Activated CD4-positive, alpha-beta T cell treated with anti-CD3 and anti-CD28 coated beads for 36 hours (primary cell): ENCODE measurements at regions of chr18 and their contacts with region 1.

Region 1: DNA sequence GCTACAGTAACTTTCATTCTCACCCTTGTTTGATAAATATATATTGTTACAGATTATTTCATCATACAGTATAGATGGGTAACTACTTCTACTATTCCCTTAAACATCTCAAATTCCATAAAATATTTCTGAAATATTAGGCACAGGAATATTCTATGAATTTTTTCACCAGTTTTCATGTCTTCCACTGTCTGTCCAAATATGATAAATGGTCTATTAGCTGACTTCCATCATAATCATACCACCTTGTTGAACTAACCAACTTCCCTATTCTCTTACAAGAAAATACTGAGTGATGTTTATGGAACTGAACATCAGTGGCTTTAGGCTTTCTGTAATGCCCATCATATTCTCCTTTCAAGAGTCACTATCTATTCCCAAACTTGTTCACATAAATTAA is 82.4 kb downstream of the TRAPPC8 start:
- DNase-seq: no peak
- ATAC-seq: no peak
- H3K4me3 Mint-ChIP-seq: no peak overlapping the region
- H3K27ac Mint-ChIP-seq: no peak overlapping the region
- H3K4me1 Mint-ChIP-seq: peaks cover 2% of the 10 kb centered on the region
- H3K27me3 Mint-ChIP-seq: no peaks in the 10 kb centered on the region

Region 2: GRCh38 chr18:31931163-31931885 is 70.8 kb after region 1 on chr18:
- CTCF ChIA-PET with region 1: no interaction called
- POLR2A ChIA-PET with region 1: no interaction called
- intact Hi-C with region 1: no loop called
- DNase-seq: no peak
- ATAC-seq: no peak
- H3K4me3 Mint-ChIP-seq: no peak overlapping the region
- H3K27ac Mint-ChIP-seq: no peak overlapping the region
- H3K4me1 Mint-ChIP-seq: peaks cover 3% of the 10 kb centered on the region
- H3K27me3 Mint-ChIP-seq: no peaks in the 10 kb centered on the region

Region 3: DNA sequence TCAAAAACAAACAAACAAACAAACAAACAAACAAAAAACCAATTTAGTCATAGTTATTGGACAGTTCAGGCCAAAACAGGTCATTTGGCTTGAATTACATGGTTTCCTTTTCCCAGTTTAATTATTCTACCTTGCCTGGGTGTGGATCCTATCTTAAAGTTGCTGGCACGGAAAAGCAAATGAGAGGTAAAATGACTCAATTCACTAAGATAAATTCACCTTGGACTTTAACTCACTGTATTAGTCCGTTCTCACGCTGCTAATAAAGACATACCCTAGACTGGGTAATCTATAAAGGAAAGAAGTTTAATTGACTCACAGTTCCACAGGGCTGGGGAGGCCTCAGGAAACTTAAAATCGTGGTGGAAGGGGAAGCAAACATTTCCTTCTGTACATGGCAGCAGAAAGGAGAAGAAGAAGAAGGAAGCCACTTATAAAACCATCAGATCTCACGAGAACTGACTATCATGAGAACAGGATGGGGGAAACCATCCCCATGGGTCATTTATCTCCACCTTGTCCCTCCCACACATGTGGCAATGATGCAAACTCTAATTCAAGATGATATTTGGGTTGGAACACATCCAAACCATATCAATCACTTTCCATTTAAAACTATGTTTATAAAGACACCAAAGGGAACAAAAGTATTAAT is 105.0 kb after region 1 on chr18:
- CTCF ChIA-PET with region 1: no interaction called
- POLR2A ChIA-PET with region 1: interaction called, 10 read pairs
- intact Hi-C with region 1: no loop called
- DNase-seq: no peak
- ATAC-seq: no peak
- H3K4me3 Mint-ChIP-seq: no peak overlapping the region
- H3K27ac Mint-ChIP-seq: no peak overlapping the region
- H3K4me1 Mint-ChIP-seq: no peaks in the 10 kb centered on the region
- H3K27me3 Mint-ChIP-seq: no peaks in the 10 kb centered on the region